Right ventricle myocardium superior (tissue), 1 donor: ENCODE measurements at regions of chr4 and their contacts with region 1.

Region 1: GRCh38 chr4:55458164-55458563 is 62.4 kb downstream of the TMEM165 start:
- DNase-seq: no peak
- ATAC-seq: no peak

Region 2: DNA sequence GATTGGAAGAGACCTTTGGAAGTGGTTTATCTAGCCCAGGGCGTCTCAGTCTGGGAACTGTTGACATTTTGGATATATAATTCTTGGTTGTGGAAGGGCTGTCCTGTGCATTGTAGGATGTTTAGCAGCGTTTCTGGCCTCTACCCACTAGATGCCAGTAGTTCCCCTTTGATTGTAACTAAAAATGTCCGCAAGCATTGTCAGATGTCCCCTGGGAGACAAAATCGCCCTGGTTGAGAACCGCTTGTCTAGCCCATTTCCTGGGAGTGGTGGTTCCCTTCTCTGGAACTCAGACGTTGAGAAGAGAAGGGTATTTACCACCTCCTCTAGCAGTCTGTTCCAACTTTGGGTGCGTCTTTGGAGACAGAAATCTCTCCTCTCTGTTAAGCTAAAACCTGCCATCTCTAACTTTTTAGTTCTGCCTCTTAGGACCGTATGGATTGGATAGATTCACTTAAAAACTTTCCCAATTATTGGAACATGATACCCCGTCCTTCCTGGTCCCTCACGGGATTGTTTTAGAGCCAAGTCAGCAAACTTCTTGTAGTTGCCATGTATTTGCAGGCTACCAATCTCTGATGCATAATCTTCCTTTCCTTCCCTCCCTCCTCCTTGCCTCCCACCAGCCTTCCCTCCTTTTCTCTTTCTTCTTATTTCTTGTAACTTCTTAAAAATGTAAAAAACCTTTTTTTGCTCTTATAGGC is 48.5 kb before region 1 on chr4:
- intact Hi-C with region 1: no loop called
- DNase-seq: no peak
- ATAC-seq: peak; percentile 81

Region 3: GRCh38 chr4:55554453-55555030 is 96.4 kb after region 1 on chr4:
- intact Hi-C with region 1: loop called (anchors 10 kb)
- DNase-seq: no peak
- ATAC-seq: no peak